PC-3 (cell line): ENCODE measurements at regions of chr12 and their contacts with region 1.

Region 1: GRCh38 chr12:109609342-109609741 is 35.7 kb downstream of the MVK start:
- DNase-seq: no peak
- ATAC-seq: no peak
- H3K4me3 ChIP-seq: no peak overlapping the region
- H3K27ac ChIP-seq: no peak overlapping the region
- H3K4me1 ChIP-seq: no peaks in the 10 kb centered on the region
- H3K27me3 ChIP-seq: no peaks in the 10 kb centered on the region
- CTCF ChIP-seq: no peak

Region 2: DNA sequence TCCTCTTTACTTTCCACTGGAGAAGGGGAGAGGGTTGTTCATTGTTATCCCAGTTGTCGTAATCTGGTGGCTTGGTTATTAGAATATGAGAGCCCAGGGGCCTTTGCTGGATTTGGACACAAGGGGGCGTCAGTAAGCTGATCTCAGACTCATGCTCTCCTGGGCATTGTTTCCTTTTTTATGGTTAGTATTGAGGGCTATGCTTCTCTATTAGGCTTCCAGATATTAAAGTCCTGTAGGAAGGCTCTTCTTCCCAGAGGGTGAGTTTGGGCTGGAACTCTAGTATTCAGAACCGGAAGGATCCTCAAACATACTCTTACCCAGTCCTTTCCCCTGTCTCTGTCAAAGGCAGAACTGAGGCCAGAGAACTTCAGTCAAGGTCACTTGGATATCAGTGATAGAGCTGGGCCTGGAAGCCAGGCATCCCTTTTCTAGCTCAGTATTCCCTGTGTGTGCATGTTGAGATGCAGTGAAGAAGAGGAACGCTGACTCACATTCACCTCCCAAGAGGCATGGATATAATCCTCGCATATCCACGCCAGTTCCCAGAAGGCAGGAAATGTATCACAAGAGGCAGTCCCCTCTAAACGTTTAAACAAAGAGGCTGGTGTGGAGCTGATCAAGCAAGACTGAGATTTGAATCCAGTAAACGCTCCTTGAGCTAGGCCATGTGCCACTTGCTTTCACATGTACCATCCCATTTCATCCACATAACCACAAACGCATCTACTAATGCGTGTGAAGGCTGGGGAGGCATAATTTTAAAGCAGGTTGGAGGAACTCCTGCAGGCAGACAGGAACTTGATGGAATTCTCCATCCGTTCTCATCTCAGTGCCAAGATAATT is 90.3 kb before region 1 on chr12:
- CTCF ChIA-PET with region 1: no interaction called
- POLR2A ChIA-PET with region 1: no interaction called
- intact Hi-C with region 1: no loop called
- DNase-seq: peak; percentile 77
- ATAC-seq: peak; percentile 91
- H3K4me3 ChIP-seq: no peak overlapping the region
- H3K27ac ChIP-seq: no peak overlapping the region
- H3K4me1 ChIP-seq: no peaks in the 10 kb centered on the region
- H3K27me3 ChIP-seq: no peaks in the 10 kb centered on the region
- CTCF ChIP-seq: peak; percentile 97

Region 3: DNA sequence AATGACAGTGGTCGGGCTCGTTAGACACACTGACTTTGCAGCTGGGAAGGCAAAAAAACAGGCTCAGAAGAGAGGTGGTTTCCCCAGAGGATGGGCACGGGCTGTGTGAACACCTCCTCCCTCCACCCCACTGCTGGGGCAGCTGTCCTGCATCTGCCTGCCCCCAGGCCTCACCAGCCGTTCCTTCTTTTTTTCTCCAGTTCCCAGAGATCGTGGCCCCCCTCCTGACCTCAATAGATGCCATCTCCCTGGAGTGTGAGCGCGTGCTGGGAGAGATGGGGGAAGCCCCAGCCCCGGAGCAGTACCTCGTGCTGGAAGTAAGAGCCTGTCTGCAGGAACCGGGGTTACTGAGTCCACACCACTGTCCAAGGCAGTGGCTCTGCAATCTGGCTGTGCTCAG is 18.3 kb before region 1 on chr12:
- CTCF ChIA-PET with region 1: no interaction called
- POLR2A ChIA-PET with region 1: no interaction called
- intact Hi-C with region 1: no loop called
- DNase-seq: no peak
- ATAC-seq: no peak
- H3K4me3 ChIP-seq: no peak overlapping the region
- H3K27ac ChIP-seq: no peak overlapping the region
- H3K4me1 ChIP-seq: no peaks in the 10 kb centered on the region
- H3K27me3 ChIP-seq: no peaks in the 10 kb centered on the region
- CTCF ChIP-seq: no peak

Region 4: GRCh38 chr12:109641422-109641821 is 32.1 kb after region 1 on chr12:
- CTCF ChIA-PET with region 1: no interaction called
- POLR2A ChIA-PET with region 1: interaction called, 15 read pairs
- intact Hi-C with region 1: no loop called
- DNase-seq: no peak
- ATAC-seq: no peak
- H3K4me3 ChIP-seq: no peak overlapping the region
- H3K27ac ChIP-seq: no peak overlapping the region
- H3K4me1 ChIP-seq: no peaks in the 10 kb centered on the region
- H3K27me3 ChIP-seq: peaks cover 21% of the 10 kb centered on the region
- CTCF ChIP-seq: no peak